Left lung (tissue), 14 donors: ENCODE measurements at regions of chr1 and their contacts with region 1.

Region 1: DNA sequence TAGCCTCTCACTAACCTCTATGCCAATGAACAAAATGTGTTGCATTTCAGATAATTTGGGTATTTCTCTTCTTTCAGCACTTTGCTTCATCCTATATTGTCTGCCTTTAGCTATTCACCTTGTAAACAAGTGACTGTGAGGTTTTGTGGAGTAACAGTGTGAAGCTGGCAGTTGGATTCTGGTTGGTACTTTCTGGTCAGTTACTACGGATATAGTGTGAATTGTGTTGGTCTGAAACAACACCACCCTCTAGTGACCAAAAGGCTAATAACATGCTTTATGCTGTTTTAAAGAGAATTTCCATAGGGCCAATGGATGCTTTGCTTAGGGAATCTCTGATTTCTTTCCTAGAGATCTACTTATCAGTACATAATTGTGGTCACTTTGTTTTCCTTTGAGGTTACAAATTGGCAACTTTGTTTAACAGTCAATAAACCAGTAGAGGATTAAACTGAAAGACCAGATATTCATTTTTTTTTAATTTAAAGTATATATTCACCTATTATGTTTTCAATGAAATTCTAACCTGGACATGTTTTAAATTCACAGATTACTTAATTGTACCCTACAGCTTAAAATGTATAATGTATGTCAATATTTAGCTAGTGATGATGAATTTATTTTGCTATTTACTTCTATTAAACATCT is 2.5 kb upstream of the PTGER3 start:
- DNase-seq: peak in 2 of 4 donors; percentile 62 to 78
- ATAC-seq: peak; percentile 80
- H3K4me3 ChIP-seq: no peak overlapping the region
- H3K27ac ChIP-seq: no peak overlapping the region
- H3K4me1 ChIP-seq: peaks cover 10 to 19% of the 10 kb centered on the region in 2 donors
- H3K27me3 ChIP-seq: peaks cover 25 to 52% of the 10 kb centered on the region in 2 donors
- CTCF ChIP-seq: peak; percentile 61 to 63

Region 2: DNA sequence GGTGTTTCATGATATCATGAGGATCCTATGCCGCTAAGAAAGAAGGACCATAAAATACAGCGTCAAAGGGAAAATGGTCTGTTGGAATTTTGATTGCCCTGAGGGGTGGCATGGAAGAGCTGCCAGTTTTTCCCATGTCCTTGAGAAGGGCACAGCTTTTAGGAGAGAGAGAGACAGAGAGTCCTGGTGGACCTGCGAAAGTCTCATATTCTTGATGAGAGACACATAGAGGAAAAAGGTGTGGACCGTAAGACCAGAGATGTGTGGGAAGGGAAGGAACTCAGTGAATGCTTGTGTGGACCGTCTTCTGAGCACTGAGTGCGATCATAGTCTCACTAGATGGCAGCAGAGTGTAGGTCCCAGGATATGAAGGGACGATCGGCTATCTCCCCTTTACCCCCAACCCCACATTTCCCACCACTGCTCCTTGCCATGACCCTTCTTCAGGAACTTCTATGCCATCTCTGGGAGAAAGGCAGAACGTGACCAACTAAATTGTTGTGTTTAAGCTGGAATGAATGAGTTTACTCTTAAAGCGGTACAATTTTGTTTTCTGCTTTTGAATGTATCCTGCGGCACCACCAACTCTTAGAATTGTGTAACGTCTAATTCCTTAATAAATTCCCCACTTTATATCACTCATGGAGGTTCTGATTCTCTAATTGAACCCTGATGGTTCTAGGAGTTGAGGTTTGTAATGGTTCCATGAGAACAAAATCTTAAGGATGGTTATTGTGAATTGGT is 521.3 kb before region 1 on chr1:
- intact Hi-C with region 1: loop called in 1 of 2 experiments (anchors 5 kb)
- DNase-seq: peak in 2 of 4 donors; percentile 30 to 48
- ATAC-seq: peak; percentile 87
- H3K4me3 ChIP-seq: no peak overlapping the region
- H3K27ac ChIP-seq: no peak overlapping the region
- H3K4me1 ChIP-seq: no peaks in the 10 kb centered on the region
- H3K27me3 ChIP-seq: no peaks in the 10 kb centered on the region
- CTCF ChIP-seq: peak in 1 of 2 donors; percentile 28

Region 3: GRCh38 chr1:70685300-70686241 is 364.5 kb before region 1 on chr1:
- intact Hi-C with region 1: loop called in 1 of 2 experiments (anchors 5 kb)
- DNase-seq: peak in 2 of 4 donors; percentile 34 to 47
- ATAC-seq: peak; percentile 99
- H3K4me3 ChIP-seq: no peak overlapping the region
- H3K27ac ChIP-seq: no peak overlapping the region
- H3K4me1 ChIP-seq: no peaks in the 10 kb centered on the region
- H3K27me3 ChIP-seq: no peaks in the 10 kb centered on the region
- CTCF ChIP-seq: peak; percentile 75 to 87

Region 4: GRCh38 chr1:71473331-71473730 is 423.3 kb after region 1 on chr1:
- intact Hi-C with region 1: no loop called
- DNase-seq: no peak
- ATAC-seq: no peak
- H3K4me3 ChIP-seq: no peak overlapping the region
- H3K27ac ChIP-seq: no peak overlapping the region
- H3K4me1 ChIP-seq: no peaks in the 10 kb centered on the region
- H3K27me3 ChIP-seq: no peaks in the 10 kb centered on the region
- CTCF ChIP-seq: no peak